Right lobe of liver (tissue), 6 donors: ENCODE measurements at regions of chr20 and their contacts with region 1.

Region 1: DNA sequence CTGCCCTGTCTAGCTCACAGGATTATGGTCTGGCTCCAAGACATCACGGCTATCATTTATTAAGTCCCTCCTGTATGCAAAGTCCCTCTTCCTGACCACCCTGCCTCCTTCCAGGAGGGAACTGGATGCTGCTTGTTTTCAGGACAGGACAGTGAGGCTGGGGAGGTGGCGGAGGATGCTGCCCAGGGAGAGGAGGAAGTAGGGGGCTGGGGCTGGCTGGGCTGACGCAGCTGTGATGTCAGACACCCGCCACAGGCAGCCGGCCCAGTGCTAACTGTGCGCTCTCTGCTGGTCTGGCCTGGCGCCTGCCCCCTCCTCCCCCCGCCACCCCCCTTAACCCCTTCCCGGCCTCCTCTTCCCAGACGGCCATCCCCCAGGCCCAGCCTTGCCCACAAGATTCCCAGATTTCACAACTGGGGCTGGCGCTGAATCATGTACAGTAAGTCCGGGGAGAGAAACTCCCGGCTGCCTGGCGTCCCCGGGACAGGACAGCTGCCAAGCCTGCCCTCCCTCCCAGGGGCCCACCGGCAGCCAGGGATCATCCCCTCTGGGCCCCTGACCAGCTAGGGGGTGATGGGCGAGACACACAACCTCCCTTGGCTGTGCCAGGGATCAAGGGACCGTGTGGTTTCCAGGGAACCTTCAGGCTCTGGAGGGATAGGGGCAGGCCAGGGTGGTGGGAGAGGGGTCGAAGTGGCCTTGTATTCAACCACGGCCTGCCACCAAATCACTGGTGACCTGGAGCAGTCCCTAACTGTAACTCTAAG is 118.1 kb downstream of the CEBPB start:
- DNase-seq: peak; percentile 91 to 97 (median 96)
- ATAC-seq: peak; percentile 49 to 70 (median 56)
- H3K4me3 ChIP-seq: no peak overlapping the region
- H3K27ac ChIP-seq: peak overlapping the region; percentile 84 to 99 (median 91)
- H3K4me1 ChIP-seq: peaks cover 0 to 79% (median 32%) of the 10 kb centered on the region in 4 donors
- H3K27me3 ChIP-seq: no peaks in the 10 kb centered on the region
- CTCF ChIP-seq: peak in 3 of 4 donors; percentile 24 to 26 (median 24)
- POLR2A ChIP-seq: peak; percentile 77

Region 2: DNA sequence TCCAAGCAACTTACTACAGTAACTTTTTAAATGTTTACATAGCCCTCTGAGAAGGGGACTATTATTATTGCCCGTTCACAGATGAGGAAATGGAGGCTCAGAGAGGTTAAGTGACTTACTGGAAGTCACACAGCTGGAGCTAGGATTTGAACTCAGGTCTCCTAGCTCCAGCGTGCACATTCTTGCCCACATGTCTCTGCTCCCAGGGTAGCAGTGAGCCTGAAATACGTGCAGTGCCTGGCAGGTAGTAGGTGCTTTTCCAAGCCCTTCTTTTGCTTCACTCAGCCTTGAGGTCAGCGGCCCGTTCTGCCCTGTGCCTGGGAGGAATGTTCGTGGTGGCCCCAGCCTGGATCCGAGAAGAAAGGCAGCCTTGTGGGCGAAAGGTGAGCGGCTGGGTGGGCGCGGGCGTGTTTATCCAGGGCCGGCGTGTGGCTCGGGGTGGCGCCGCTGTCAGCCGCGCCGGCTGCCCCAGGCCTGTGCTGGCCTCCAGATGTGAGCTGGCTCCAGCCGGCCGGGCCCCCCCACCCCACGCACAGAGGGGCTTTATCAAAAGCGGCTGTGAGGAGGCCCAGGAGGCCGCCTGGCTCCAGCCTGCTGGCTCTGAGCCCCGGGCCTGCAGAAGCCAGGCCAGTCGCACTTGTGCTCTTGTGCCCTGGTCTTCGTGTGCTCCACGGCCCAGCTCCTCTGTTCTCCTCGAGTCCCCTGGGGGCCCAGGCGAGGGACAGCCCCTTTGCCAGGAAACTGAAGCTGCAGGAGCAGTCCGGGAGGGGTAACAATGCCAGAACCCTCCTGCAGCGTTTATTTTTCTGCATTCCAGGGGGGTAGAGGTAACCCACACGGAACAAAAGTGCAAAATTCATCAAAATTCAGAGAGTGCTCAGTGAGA is 253.8 kb before region 1 on chr20:
- intact Hi-C with region 1: no loop called
- DNase-seq: no peak
- ATAC-seq: peak in 1 of 4 donors; percentile 23
- H3K4me3 ChIP-seq: no peak overlapping the region
- H3K27ac ChIP-seq: no peak overlapping the region
- H3K4me1 ChIP-seq: no peaks in the 10 kb centered on the region
- H3K27me3 ChIP-seq: no peaks in the 10 kb centered on the region
- CTCF ChIP-seq: no peak
- POLR2A ChIP-seq: no peak

Region 3: GRCh38 chr20:50366270-50367103 is 57.8 kb after region 1 on chr20:
- intact Hi-C with region 1: loop called (anchors 10 kb)
- DNase-seq: peak; percentile 81 to 90 (median 88)
- ATAC-seq: peak; percentile 85 to 89 (median 86)
- H3K4me3 ChIP-seq: no peak overlapping the region
- H3K27ac ChIP-seq: peak overlapping the region; percentile 12 to 48 (median 18)
- H3K4me1 ChIP-seq: peaks cover 0 to 23% (median 8%) of the 10 kb centered on the region in 4 donors
- H3K27me3 ChIP-seq: no peaks in the 10 kb centered on the region
- CTCF ChIP-seq: no peak
- POLR2A ChIP-seq: no peak

Region 4: GRCh38 chr20:50379049-50379990 is 70.6 kb after region 1 on chr20:
- intact Hi-C with region 1: loop called in 1 of 2 experiments (anchors 10 kb)
- DNase-seq: peak; percentile 86 to 92 (median 86)
- ATAC-seq: peak; percentile 63 to 79 (median 73)
- H3K4me3 ChIP-seq: no peak overlapping the region
- H3K27ac ChIP-seq: peak overlapping the region; percentile 67 to 77 (median 77)
- H3K4me1 ChIP-seq: peaks cover 0 to 49% (median 19%) of the 10 kb centered on the region in 4 donors
- H3K27me3 ChIP-seq: no peaks in the 10 kb centered on the region
- CTCF ChIP-seq: no peak
- POLR2A ChIP-seq: peak; percentile 79

Region 5: DNA sequence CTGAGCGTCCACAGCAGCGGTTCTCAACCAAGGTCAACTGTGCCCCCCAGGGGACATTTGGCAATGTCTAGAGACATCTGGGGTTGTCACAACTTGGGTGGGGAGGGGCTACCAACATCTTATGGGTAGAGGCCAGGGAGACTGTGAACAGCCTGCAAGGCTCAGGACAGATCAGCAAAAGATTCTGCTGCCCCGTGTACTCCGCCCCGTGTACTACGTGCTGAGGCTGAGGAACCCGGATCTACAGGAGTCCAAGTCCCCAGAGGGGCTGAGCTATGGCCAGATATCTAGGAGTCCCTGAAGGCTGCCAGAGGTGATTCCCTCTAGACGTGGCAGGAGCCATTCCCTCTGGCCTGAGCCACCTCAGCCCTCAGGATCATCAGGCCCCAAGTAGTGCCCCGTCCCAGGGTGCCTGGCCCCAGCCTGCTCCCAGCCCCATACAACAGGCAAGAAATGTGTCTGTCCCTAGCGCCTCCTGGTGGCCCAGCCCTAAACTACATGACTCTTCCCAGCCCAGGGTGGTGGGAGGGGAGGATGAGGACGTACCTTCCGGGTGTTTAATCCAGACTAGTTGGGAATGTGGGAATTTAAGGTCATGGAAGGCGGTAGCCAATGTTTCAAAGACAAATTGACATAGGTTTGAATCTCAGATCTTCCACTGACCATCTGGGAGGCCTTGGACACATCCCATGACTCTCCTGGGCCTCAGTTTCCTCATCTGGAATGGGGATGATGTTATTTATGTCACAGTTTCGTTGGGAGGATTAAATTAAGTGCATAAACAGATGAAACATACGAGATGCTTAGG is 152.0 kb after region 1 on chr20:
- intact Hi-C with region 1: loop called in 1 of 2 experiments (anchors 10 kb)
- DNase-seq: peak; percentile 89 to 92 (median 91)
- ATAC-seq: peak; percentile 85 to 92 (median 88)
- H3K4me3 ChIP-seq: no peak overlapping the region
- H3K27ac ChIP-seq: peak overlapping the region; percentile 64 to 76 (median 72)
- H3K4me1 ChIP-seq: peaks cover 0 to 39% (median 18%) of the 10 kb centered on the region in 4 donors
- H3K27me3 ChIP-seq: no peaks in the 10 kb centered on the region
- CTCF ChIP-seq: peak; percentile 93 to 99 (median 94)
- POLR2A ChIP-seq: peak; percentile 48

Region 6: GRCh38 chr20:50484276-50484976 is 175.7 kb after region 1 on chr20:
- intact Hi-C with region 1: no loop called
- DNase-seq: no peak
- ATAC-seq: peak in 1 of 4 donors; percentile 14
- H3K4me3 ChIP-seq: no peak overlapping the region
- H3K27ac ChIP-seq: peak overlapping the region; percentile 70 to 78 (median 77)
- H3K4me1 ChIP-seq: peaks cover 0 to 8% (median 0%) of the 10 kb centered on the region in 4 donors
- H3K27me3 ChIP-seq: no peaks in the 10 kb centered on the region
- CTCF ChIP-seq: no peak
- POLR2A ChIP-seq: no peak